Activated T-helper 1 cell treated with anti-CD3 and anti-CD28 coated beads, Interleukin-12 subunit alpha, Interleukin-12 subunit beta, Interleukin-2, Interleukin-4 antibody, amounts not matched to agents 30 ng/mL and 10 ng/mL and 1 ng/mL, durations not matched to agents 14 hours and 24 hours and 36 hours (primary cell): ENCODE measurements at regions of chr5 and their contacts with region 1.

Region 1: DNA sequence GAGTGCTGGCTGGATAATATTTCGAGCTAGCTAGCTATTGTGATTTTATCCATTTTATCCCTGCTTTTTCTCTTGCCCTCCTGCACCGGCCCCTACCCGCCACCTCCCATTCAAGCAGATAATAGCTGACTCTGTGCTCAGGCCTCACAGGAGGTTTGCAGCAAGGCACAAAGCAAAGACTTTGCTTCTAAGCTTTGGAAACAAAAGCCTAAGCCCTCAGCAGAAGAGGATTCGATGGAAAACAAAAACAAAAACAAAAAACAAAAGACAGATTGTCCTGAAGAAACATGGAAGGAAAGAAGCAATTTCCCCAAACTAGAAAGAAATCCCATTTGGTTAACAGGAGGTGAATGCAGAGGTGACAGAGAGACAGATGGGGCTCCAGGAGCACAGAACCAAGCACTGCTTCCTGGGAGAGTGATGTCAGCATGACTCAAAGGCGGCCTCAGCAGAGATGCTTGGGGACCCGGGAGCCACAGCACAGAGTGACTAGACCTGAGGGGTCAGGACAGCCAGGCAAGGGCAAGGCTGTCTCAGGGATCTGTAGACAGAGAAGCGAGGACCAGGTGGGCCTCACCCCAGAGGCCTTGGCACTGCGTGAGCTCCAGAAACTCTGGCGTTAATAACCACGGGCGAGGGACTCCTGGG is 28.4 kb downstream of the MTX3 start:
- DNase-seq: peak; percentile 29
- H3K4me3 Mint-ChIP-seq: peak overlapping the region; percentile 35
- H3K27ac Mint-ChIP-seq: peak overlapping the region; percentile 85
- H3K4me1 Mint-ChIP-seq: peaks cover 39% of the 10 kb centered on the region
- H3K27me3 Mint-ChIP-seq: no peaks in the 10 kb centered on the region

Region 2: GRCh38 chr5:79947567-79947966 is 15.1 kb before region 1 on chr5:
- intact Hi-C with region 1: no loop called
- DNase-seq: no peak
- H3K4me3 Mint-ChIP-seq: no peak overlapping the region
- H3K27ac Mint-ChIP-seq: no peak overlapping the region
- H3K4me1 Mint-ChIP-seq: peaks cover 7% of the 10 kb centered on the region
- H3K27me3 Mint-ChIP-seq: peaks cover 1% of the 10 kb centered on the region

Region 3: DNA sequence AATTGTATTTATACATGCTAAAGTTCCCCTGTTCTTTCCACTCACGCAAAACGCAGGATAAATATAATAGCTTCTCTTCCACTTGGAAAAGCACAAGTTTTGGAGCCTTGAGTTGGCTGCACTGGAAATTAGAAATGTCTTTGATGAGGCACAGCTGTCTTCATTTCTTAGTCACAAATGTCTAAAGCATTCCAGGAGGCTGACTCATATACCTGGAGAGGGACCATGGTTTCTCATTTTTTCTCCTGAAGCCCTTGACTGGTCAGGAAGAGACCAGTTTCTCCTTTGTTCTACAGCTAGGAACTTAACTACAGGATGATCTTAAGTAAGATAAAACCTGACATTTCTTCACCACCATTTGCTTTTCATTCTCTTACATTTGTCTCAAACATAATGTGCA is 12.2 kb after region 1 on chr5:
- intact Hi-C with region 1: loop called (anchors 1 kb)
- DNase-seq: no peak
- H3K4me3 Mint-ChIP-seq: no peak overlapping the region
- H3K27ac Mint-ChIP-seq: no peak overlapping the region
- H3K4me1 Mint-ChIP-seq: peaks cover 9% of the 10 kb centered on the region
- H3K27me3 Mint-ChIP-seq: peaks cover 3% of the 10 kb centered on the region

Region 4: DNA sequence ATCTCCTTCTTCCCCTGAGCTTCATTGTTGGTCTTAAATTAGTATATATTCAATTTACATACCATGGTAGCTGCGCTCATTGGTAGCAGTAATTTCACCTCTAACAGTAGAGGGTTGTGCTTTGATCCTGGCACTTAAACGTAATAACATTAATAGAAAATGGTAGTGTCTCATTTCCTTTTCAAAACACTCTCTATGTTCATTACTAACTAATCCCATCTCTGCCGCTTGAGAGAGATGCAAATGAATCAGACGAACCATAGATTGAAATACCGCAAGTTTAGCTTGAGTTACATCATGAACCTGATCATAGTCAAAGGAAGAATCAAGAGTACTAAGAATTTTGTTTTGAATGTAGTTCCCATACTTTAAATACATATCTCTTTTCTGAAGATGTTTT is 74.7 kb after region 1 on chr5:
- intact Hi-C with region 1: loop called (anchors 1 kb)
- DNase-seq: no peak
- H3K4me3 Mint-ChIP-seq: no peak overlapping the region
- H3K27ac Mint-ChIP-seq: no peak overlapping the region
- H3K4me1 Mint-ChIP-seq: peaks cover 23% of the 10 kb centered on the region
- H3K27me3 Mint-ChIP-seq: peaks cover 47% of the 10 kb centered on the region